Activated CD4-positive, alpha-beta memory T cell treated with anti-CD3 and anti-CD28 coated beads, Interleukin-2, amount 10 ng/mL, durations not matched to agents 7 days and 5 days (primary cell): ENCODE measurements at regions of chr1 and their contacts with region 1.

Region 1: DNA sequence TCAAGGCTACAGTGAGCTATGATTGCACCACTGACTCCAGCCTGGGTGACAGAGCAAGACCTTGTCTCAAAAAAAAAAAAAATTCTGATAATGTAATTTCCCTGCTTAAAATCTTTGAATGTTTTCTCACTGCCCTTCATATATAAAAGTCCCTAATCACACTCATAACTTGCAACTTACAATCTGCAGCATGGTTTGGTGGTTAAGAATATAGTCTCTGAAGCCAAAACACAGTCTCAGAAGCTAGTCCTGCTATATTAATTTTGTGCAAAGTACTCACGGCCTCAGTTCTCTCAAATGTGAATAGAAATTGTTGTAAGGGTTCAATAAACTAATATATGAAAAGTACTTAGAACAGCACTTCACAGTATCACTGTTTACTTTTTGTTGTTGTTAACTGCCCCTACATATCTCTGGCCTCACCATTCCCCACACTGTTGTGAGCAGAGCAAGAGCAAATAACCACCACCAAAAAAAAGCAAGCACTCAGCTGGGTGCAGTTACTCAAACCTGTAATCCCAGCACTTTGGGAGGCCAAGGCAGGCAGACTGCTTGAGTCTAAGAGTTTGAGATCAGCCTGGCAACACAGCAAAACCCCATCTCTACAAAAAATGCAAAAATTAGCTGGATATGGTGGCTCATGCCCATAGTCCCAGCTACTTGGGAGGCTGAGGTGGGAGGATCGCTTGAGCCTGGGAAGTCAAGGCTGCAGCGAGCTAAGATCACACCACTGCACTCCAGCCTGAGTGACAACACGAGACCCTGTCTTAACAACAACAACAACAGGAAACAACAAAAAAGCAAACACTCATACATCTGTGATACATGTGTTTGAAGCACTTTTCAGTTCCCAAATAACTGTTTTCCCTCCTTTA is 22.4 kb downstream of the ASH1L start:
- DNase-seq: no peak
- H3K4me3 Mint-ChIP-seq: no peak overlapping the region
- H3K27ac Mint-ChIP-seq: peak overlapping the region; percentile 69
- H3K4me1 Mint-ChIP-seq: peaks cover 63% of the 10 kb centered on the region
- H3K27me3 Mint-ChIP-seq: no peaks in the 10 kb centered on the region

Region 2: GRCh38 chr1:155562581-155563376 is 22.5 kb after region 1 on chr1 and contains the start of gene ASH1L:
- CTCF ChIA-PET with region 1: no interaction called
- POLR2A ChIA-PET with region 1: interaction called, 26 read pairs
- DNase-seq: peak; percentile 92
- H3K4me3 Mint-ChIP-seq: peak within 1 kb of the TSS; percentile 97
- H3K27ac Mint-ChIP-seq: peak within 1 kb of the TSS; percentile 95
- H3K4me1 Mint-ChIP-seq: peaks cover 44% of the 10 kb centered on the region
- H3K27me3 Mint-ChIP-seq: no peaks in the 10 kb centered on the region
- total RNA-seq, gene ASH1L: 35.9 to 42.0 TPM

Region 3: DNA sequence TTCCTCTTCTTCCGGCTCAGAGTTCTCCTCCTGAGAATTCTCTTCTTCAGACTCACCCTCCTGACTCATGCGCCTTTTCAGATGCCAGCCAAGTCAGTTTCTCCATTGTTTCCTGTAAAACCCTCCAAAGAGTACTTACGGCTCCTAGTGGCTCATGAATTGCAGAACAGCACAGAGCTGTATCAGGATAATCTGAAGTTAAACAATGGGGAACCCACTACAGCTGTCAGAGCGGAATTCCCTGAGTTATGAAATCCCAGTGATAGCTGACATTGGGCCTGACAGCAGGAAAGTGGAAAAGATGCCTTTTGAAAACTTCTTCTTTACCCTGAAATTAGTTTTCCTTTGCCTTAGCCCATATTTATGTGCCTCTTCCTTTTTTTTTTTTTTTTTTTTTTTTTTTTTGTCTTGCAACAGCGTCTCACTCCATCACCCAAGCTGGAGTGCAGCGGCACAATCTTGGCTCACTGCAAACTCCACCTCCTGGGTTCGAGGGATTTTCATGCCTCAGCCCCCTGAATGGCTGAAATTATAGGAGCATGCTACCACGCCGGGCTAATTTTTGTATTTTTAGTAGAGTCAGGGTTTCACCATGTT is 108.4 kb after region 1 on chr1:
- CTCF ChIA-PET with region 1: no interaction called
- POLR2A ChIA-PET with region 1: no interaction called
- DNase-seq: no peak
- H3K4me3 Mint-ChIP-seq: no peak overlapping the region
- H3K27ac Mint-ChIP-seq: no peak overlapping the region
- H3K4me1 Mint-ChIP-seq: peaks cover 2% of the 10 kb centered on the region
- H3K27me3 Mint-ChIP-seq: peaks cover 2% of the 10 kb centered on the region